ENCODE measurements at regions of chr3 and their contacts with region 1.

Region 1: GRCh38 chr3:73100741-73101559 is 39.5 kb downstream of the EBLN2 start:
- DNase-seq: peak; percentile 87

Region 2: GRCh38 chr3:72391659-72392058 is 709.3 kb before region 1 on chr3:
- intact Hi-C with region 1: no loop called
- DNase-seq: no peak

Region 3: DNA sequence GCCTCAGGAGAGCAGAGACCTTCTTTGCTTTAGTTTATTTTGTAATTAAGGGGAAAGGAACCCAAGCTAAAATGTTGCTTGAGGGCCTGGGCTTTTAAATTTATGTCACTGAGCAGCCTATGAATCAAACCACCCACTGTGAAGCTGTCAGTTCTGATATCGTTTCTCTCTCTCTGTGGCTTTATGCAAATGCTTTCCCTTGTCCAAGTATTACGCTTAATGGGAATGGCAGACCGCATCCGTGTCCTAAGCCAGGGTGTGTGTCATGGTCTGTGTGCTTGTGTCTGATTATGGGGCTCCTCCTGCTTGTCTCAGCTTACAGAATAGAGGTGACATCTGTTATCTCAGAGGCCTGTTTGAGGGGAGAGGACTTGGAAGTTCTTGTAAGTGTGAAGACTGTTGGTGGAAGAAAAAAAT is 42.9 kb after region 1 on chr3:
- intact Hi-C with region 1: no loop called
- DNase-seq: no peak

Region 4: DNA sequence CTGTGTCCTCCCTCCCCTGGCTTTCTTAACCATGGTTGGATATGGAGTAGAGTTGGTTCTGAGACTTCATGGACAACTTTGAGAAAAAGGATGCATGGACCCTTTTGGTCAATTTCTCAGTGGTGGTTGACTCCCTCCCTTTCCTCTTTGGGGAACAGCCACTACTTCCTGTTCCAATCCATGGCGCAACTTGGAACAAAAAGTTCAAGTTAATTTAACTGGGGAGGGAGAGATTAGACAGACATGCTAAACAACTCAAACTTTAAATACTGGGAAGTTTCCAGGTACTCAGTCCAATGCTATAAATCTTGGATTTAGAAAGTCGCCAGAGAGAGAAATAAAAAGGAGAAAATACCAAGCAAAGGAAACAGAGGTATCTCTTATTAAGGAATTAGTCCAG is 321.6 kb after region 1 on chr3:
- intact Hi-C with region 1: loop called in 1 of 2 experiments (anchors 10 kb)
- DNase-seq: no peak

Region 5: DNA sequence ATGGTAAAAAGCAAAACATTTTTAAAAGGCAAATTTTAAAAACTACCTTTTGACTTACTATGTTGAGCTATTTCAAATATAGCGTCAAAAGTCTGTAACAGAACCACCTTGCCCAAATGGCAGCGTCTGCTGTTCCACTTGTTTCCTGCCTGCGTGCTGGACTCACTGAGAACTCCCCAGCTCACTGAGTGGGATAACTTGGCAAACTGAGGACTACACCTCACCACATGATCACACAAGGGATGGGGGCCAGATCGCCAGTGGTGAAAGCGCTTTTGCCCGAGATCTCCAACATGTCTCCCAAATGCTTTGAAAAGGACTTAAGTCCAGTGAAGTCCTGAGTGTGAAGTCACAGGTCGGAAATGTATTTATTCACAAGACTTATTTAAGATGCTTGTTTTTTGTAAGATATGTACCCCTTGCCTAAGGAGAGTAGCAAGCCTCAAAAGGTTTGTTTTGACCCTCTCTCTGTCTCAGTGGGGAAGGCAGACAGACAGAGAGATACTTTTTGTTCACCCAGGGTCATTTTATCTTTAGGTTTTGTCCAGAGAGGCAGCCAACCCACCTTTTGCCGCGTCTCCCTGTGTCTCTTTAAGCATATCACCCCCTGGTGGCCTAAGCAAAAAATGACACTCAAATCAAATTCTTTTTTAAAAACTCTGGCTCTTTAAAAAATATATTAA is 331.2 kb after region 1 on chr3:
- intact Hi-C with region 1: loop called (anchors 5 to 10 kb)
- DNase-seq: no peak

Region 6: DNA sequence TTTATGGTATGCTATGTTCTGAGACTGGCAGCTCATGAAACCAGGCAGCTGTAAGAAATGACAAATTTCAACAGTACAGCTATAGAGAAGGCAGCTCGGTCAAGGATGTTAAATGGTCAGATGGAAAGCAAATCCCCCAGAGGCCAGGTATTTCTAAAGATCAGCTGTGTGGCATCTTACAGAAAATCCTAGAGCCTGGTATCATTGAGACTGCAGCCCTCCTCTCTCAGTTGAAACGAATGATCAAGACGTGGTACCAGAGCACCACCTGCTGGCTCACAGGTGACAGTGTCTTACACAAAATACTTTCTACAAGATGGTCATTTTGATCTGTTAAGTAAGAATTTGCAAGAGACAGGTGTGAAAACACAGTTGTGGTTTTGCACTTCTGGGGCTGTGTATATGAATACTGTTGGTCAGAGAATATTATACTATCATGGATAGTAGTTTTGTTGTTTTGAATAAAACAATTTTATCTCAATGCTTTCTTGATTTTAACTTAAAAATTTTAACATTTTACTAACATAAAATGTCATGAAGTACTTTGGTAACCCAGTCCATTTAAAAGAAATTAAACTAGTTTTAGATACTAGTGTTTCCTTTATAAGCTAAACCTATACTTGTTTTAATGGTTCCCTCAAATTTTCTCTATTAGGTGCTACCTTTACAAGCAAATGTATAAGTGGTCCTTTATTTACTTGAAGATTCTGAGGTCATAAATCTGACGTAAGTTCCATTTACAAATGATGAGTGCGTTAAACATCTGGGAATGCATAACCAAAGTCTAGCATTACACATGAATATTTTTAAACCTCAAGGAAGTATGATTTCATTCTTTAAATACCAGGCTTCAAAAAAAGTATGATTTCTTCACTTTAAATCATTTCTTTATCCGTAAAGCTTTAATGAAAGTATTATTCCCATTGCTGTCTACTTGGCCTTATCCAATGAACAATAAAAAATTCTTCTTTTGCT is 401.9 kb after region 1 on chr3:
- intact Hi-C with region 1: loop called (anchors 5 kb)
- DNase-seq: peak; percentile 88

Region 7: GRCh38 chr3:73848173-73848906 is 747.4 kb after region 1 on chr3:
- intact Hi-C with region 1: loop called (anchors 10 kb)
- DNase-seq: no peak

Region 8: DNA sequence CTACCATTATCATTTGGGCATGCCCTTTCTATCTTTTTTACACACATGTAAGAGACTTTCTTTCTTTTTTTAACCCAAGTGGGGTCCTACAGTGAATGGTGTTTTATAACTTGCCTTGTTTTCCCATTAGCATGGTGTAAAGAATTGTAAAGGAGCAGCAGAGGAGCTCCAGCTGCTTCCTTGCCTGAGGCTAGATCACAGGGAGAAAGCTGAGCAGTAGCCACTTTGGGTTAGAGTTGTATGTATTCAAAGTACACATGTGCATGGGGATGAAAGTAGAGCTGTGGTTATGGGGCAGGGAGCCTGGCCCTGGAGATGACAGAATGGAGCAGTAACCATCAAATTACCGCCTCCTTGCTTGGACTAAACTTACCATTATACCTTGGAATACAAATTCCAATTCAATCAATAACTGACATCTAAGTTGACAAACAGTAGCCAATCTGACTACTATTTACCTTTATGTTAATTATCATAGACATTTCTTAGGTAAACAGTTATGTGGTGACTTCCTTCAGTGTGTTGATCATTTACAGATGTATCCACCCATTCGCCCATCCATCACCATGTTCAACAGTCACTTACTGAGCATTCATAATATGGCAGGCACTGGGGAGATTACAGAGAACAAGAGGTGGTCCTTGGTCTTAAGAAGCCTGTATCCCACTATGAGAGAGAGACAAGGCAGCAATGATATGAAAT is 755.0 kb after region 1 on chr3:
- intact Hi-C with region 1: loop called in 1 of 2 experiments (anchors 10 kb)
- DNase-seq: no peak

Measured in posterior vena cava (tissue), 2 donors.